ENCODE measurements at regions of chr18 and their contacts with region 1.

Region 1: DNA sequence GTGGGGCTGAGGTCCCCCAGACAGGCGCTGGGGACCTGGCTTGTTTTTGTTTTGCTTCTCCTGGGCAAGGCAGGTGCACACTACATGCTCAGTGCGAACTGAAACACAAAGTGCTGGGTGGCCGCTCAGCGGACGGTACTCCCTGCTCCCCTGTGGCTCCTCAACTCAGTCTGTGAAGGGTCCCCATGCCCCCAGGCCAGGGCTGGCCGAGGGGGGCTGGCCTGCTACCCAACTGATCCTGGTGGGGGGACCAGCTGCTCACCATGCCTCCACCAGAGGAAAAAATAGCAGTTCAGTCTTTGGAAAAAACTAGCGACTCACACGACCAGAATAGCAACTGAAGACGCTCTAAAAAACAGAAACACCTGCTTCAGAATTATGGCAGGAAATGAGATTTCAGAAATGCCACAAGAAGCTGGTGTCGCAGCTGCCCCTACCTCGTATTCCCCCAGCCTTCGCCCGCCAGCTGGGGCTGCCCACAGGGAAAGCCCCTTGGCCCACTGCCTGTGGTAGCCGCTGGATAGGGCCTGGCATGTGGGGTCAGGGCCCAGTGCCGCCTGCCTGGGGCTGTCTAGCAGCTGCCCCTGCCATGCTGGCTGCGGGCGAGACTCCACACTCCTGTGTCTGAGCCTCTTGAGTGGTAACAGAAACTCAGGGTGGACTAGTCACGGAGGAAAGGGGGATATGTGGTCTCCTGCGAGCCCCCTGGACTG is 43.7 kb downstream of the MEX3C start:
- DNase-seq: peak; percentile 26 to 69 (median 46)
- H3K4me3 ChIP-seq: peak overlapping the region; percentile 47 to 53
- H3K4me3 Mint-ChIP-seq: peak overlapping the region; percentile 81 to 90 (median 85)
- H3K27ac ChIP-seq: peak overlapping the region; percentile 50
- H3K27ac Mint-ChIP-seq: peak overlapping the region; percentile 78 to 92 (median 87)
- H3K4me1 ChIP-seq: peaks cover 36% of the 10 kb centered on the region
- H3K4me1 Mint-ChIP-seq: peaks cover 20 to 41% (median 29%) of the 10 kb centered on the region in 4 donors
- H3K27me3 ChIP-seq: no peaks in the 10 kb centered on the region
- H3K27me3 Mint-ChIP-seq: no peaks in the 10 kb centered on the region

Region 2: GRCh38 chr18:51171223-51171622 is 17.4 kb after region 1 on chr18:
- CTCF ChIA-PET with region 1: interaction called, 11 read pairs
- POLR2A ChIA-PET with region 1: interaction called, 5 read pairs
- intact Hi-C with region 1: no loop called
- DNase-seq: no peak
- H3K4me3 ChIP-seq: no peak overlapping the region
- H3K4me3 Mint-ChIP-seq: no peak overlapping the region
- H3K27ac ChIP-seq: no peak overlapping the region
- H3K27ac Mint-ChIP-seq: peak overlapping the region in 2 of 7 donors; percentile 13 to 55
- H3K4me1 ChIP-seq: peaks cover 23% of the 10 kb centered on the region
- H3K4me1 Mint-ChIP-seq: peaks cover 28 to 51% (median 31%) of the 10 kb centered on the region in 4 donors
- H3K27me3 ChIP-seq: no peaks in the 10 kb centered on the region
- H3K27me3 Mint-ChIP-seq: no peaks in the 10 kb centered on the region

Measured in CD4-positive, alpha-beta memory T cell (primary cell).